Naive thymus-derived CD8-positive, alpha-beta T cell (primary cell): ENCODE measurements at regions of chr1 and their contacts with region 1.

Region 1: DNA sequence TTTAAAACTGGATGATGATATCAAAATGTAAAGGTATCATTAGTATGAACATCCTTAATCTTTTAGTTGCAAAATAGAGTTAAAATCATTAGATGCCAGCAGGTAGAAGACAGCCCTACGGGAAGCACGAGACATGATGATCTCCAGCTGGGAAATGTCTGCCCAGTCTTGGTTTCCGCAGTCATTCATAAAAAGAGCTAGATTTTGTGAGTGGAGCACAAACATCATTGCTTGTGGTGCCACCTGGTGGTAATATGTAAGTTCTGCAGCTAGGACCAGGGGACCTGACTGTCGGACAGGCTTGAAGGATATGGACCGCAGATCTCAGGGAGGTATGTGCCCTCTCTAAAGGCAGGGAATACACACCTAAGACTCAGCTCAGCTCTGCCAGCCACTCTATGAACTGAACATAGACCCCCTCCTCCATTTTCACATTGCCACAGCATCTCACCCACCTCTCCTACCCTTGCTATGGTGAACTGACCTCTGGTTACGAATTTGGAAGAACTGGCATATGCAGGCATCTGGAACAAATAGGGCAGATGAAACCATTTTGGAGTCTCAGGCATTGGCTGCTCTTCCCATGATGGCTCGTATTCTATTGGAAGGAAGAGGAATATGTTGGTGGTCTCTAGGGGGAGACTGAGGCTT is 9.2 kb downstream of the FCMR start:
- DNase-seq: peak in 9 of 10 donors; percentile 50 to 82 (median 65)
- ATAC-seq: peak; percentile 18 to 37
- H3K4me3 Mint-ChIP-seq: peak overlapping the region in 3 of 10 donors; percentile 67 to 78 (median 69)
- H3K27ac Mint-ChIP-seq: peak overlapping the region in 5 of 10 donors; percentile 87 to 98 (median 95)
- H3K4me1 Mint-ChIP-seq: peaks cover 62 to 92% (median 92%) of the 10 kb centered on the region in 4 donors
- H3K27me3 Mint-ChIP-seq: no peaks in the 10 kb centered on the region

Region 2: GRCh38 chr1:206734499-206735142 is 177.9 kb before region 1 on chr1:
- POLR2A ChIA-PET with region 1: interaction called, 19 read pairs
- DNase-seq: peak; percentile 64 to 88 (median 74)
- ATAC-seq: peak; percentile 55 to 75
- H3K4me3 Mint-ChIP-seq: peak overlapping the region in 5 of 10 donors; percentile 5 to 60 (median 26)
- H3K27ac Mint-ChIP-seq: peak overlapping the region; percentile 61 to 95 (median 86)
- H3K4me1 Mint-ChIP-seq: peaks cover 39 to 61% (median 56%) of the 10 kb centered on the region in 4 donors
- H3K27me3 Mint-ChIP-seq: no peaks in the 10 kb centered on the region

Region 3: GRCh38 chr1:206803221-206803730 is 109.3 kb before region 1 on chr1:
- POLR2A ChIA-PET with region 1: interaction called, 10 read pairs
- DNase-seq: peak; percentile 45 to 94 (median 86)
- ATAC-seq: peak; percentile 93 to 95
- H3K4me3 Mint-ChIP-seq: peak overlapping the region; percentile 4 to 68 (median 61)
- H3K27ac Mint-ChIP-seq: peak overlapping the region; percentile 80 to 98 (median 97)
- H3K4me1 Mint-ChIP-seq: peaks cover 35 to 72% (median 65%) of the 10 kb centered on the region in 4 donors
- H3K27me3 Mint-ChIP-seq: no peaks in the 10 kb centered on the region

Region 4: DNA sequence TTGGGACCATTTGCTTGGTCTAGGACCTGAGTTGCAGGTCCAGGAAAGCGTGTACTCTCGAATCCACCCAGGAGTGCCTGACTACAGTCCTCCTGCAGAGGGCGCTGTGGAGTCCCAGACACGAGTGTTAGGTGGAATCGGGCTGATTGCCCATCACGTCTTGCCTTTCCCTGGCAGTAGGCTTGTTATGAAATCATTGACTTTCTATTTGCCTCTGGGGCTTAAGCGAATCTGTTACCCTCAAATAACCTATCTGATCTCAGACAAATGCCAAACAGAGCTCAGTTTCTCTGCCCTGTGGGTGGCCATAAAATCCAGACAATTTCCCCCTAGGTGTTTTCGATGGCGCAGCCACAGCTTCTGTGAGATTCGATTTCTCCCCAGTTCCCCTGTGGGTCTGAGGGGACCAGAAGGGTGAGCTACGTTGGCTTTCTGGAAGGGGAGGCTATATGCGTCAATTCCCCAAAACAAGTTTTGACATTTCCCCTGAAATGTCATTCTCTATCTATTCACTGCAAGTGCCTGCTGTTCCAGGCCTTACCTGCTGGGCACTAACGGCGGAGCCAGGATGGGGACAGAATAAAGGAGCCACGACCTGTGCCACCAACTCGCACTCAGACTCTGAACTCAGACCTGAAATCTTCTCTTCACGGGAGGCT is 47.4 kb before region 1 on chr1 and contains the start of gene IL20:
- POLR2A ChIA-PET with region 1: interaction called, 11 read pairs
- DNase-seq: peak; percentile 73 to 92 (median 86)
- ATAC-seq: peak; percentile 96 to 99
- H3K4me3 Mint-ChIP-seq: no peak within 1 kb of the TSS
- H3K27ac Mint-ChIP-seq: peak within 1 kb of the TSS in 4 of 10 donors; percentile 11 to 61 (median 43)
- H3K4me1 Mint-ChIP-seq: peaks cover 7 to 14% (median 10%) of the 10 kb centered on the region in 4 donors
- H3K27me3 Mint-ChIP-seq: peaks cover 0 to 9% (median 0%) of the 10 kb centered on the region in 5 donors
- polyA plus RNA-seq, gene IL20: not detected

Region 5: GRCh38 chr1:206895830-206896242 is 16.7 kb before region 1 on chr1:
- POLR2A ChIA-PET with region 1: interaction called, 562 read pairs
- DNase-seq: no peak
- ATAC-seq: no peak
- H3K4me3 Mint-ChIP-seq: no peak overlapping the region
- H3K27ac Mint-ChIP-seq: peak overlapping the region in 5 of 10 donors; percentile 26 to 64 (median 51)
- H3K4me1 Mint-ChIP-seq: peaks cover 29 to 64% (median 51%) of the 10 kb centered on the region in 4 donors
- H3K27me3 Mint-ChIP-seq: no peaks in the 10 kb centered on the region

Region 6: GRCh38 chr1:206925106-206925736 is 12.7 kb after region 1 on chr1:
- POLR2A ChIA-PET with region 1: interaction called, 562 read pairs
- DNase-seq: peak in 9 of 10 donors; percentile 47 to 81 (median 66)
- ATAC-seq: peak; percentile 48 to 52
- H3K4me3 Mint-ChIP-seq: no peak overlapping the region
- H3K27ac Mint-ChIP-seq: no peak overlapping the region
- H3K4me1 Mint-ChIP-seq: peaks cover 18 to 40% (median 28%) of the 10 kb centered on the region in 4 donors
- H3K27me3 Mint-ChIP-seq: no peaks in the 10 kb centered on the region